Mammary epithelial cell (primary cell): ENCODE measurements at regions of chr2 and their contacts with region 1.

Region 1: DNA sequence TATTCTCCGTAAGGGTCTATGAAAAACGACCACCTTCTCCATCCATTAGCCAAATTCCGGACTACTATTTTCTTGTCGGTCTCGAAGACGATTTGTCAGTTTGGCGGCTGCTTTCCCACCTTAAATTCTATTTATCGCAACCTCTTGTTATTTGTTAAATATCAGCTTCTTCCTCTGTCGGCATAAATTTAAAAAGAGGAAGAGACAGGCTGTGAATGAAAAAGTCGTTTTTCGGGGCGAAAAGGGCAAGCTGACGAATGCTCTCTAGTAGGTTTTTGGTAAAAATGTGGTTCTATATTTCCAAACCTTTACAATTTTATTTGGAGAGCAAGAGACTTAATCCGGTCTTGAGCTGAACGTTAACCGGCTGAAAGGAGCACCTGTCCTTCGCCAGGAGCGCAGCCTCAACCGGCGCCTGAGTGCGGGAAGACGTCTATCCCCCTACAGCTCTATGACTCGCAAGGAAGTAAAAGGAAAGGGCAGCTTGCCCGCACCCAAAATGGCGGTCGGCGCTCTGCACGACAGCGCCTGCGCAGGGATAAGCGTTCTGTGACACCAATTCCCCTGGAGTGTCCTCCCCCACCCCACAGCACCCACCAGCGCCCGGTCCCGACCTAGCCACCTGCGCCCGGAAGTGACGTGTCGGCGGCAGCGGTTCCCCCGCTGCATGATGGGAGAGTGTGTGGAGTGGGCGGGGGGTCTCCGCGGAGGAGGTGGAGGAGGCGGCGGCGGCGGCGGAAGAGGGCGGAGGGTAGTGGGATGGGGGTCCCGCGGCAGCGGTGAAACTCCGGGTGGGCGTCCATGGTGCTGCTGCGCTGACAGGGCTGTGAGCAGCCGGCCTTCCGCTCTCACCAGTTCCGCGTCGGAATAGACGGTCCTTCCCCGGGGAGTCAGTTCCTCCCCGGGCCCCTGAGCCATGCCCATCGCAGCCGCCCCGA is at the start of gene AFTPH:
- DNase-seq: peak; percentile 99
- H3K4me3 ChIP-seq: peak within 1 kb of the TSS; percentile 79 to 93 (median 83)
- H3K27ac ChIP-seq: peak within 1 kb of the TSS; percentile 83
- H3K4me1 ChIP-seq: peaks cover 3% of the 10 kb centered on the region
- H3K27me3 ChIP-seq: no peaks in the 10 kb centered on the region
- CTCF ChIP-seq: no peak
- total RNA-seq, gene AFTPH: 20.7 to 34.5 TPM

Region 2: DNA sequence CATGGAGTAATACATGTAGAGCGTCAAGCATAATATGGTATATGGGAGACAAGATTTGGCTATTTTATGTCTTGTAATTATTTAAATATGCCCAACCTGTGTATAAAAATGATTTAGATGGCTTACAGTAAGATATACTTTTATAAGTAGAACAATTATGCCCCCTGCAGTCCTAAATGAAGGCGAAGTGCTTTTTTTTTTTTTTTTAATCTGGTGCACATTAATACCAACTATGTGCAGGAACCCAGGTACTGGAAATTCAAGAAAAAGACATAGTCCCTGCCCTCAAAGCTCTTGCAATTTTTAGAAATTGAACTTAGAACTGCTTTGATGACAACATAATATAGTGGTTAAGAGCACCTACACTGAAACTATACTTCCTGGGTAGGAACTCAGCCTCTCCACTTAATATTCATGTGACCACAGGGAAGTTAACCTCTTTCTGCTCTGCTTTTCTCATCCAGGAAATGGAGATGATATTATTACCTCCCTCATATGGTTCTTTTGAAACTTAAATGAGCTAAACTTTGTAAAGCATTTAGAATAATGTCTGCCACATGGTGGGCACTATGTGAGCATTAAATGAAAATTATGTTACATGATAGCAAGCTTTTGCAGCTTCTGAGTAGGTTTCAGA is 38.3 kb after region 1 on chr2:
- CTCF ChIA-PET with region 1: interaction called, 6 read pairs
- dilution Hi-C with region 1: no loop called
- in situ Hi-C with region 1: no loop called
- intact Hi-C with region 1: loop called (anchors 1 kb)
- DNase-seq: no peak
- H3K4me3 ChIP-seq: no peak overlapping the region
- H3K27ac ChIP-seq: no peak overlapping the region
- H3K4me1 ChIP-seq: peaks cover 6% of the 10 kb centered on the region
- H3K27me3 ChIP-seq: no peaks in the 10 kb centered on the region
- CTCF ChIP-seq: peak; percentile 29 to 30

Region 3: GRCh38 chr2:64865073-64865830 is 341.3 kb after region 1 on chr2:
- CTCF ChIA-PET with region 1: no interaction called
- dilution Hi-C with region 1: no loop called
- in situ Hi-C with region 1: no loop called
- intact Hi-C with region 1: loop called (anchors 2 kb)
- DNase-seq: peak; percentile 45
- H3K4me3 ChIP-seq: peak overlapping the region; percentile 41 to 50 (median 48)
- H3K27ac ChIP-seq: peak overlapping the region; percentile 45
- H3K4me1 ChIP-seq: peaks cover 22% of the 10 kb centered on the region
- H3K27me3 ChIP-seq: no peaks in the 10 kb centered on the region
- CTCF ChIP-seq: peak; percentile 37 to 50

Region 4: DNA sequence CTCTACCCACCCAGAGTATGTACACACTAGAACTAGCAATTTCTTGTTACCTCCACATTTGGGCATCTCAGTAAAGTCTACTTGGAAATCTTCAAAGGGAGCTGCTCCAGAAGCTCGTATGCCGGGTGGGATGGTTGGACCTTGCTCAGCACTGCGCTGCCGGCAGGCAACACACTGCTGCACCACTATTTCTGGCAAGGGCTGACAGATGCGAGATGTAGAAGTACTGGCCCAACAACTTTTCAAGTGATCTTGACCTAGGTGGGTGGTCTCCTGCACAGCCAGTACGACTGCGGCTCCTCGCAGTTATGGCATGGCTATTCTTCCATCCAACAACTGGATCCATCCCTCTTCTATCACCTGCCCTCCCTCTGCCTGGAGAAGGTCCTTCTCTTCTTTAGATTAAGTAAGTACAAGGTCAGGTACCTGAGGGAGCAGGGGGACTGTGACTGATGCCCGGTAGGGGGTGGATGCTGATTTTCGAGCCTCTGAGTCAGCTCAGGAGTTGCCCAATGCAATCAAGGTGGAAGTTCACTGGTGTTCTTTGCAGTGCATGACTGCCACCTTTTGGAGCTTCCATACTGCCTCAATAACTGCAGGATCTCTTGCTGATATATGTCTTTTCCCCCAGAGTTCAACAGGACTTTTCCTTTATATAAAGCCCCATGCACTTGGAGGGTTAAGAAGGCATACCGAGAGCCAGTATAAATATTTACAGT is 364.8 kb after region 1 on chr2:
- CTCF ChIA-PET with region 1: no interaction called
- dilution Hi-C with region 1: no loop called
- in situ Hi-C with region 1: no loop called
- intact Hi-C with region 1: loop called (anchors 1 kb)
- DNase-seq: peak; percentile 80
- H3K4me3 ChIP-seq: no peak overlapping the region
- H3K27ac ChIP-seq: no peak overlapping the region
- H3K4me1 ChIP-seq: no peaks in the 10 kb centered on the region
- H3K27me3 ChIP-seq: no peaks in the 10 kb centered on the region
- CTCF ChIP-seq: peak; percentile 73 to 80